Dorsolateral prefrontal cortex (tissue), 120 donors: ENCODE measurements at regions of chr9 and their contacts with region 1.

Region 1: GRCh38 chr9:125261501-125262293 is at the start of gene GAPVD1:
- DNase-seq: peak; percentile 64 to 94 (median 81)
- H3K4me3 ChIP-seq: peak within 1 kb of the TSS; percentile 63 to 100 (median 96)
- H3K27ac ChIP-seq: peak within 1 kb of the TSS; percentile 13 to 94 (median 85)
- H3K27me3 ChIP-seq: no peaks in the 10 kb centered on the region
- CTCF ChIP-seq: peak; percentile 10 to 77 (median 56)
- total RNA-seq, gene GAPVD1: 52.7 to 86.4 (median 69.3) TPM

Region 2: DNA sequence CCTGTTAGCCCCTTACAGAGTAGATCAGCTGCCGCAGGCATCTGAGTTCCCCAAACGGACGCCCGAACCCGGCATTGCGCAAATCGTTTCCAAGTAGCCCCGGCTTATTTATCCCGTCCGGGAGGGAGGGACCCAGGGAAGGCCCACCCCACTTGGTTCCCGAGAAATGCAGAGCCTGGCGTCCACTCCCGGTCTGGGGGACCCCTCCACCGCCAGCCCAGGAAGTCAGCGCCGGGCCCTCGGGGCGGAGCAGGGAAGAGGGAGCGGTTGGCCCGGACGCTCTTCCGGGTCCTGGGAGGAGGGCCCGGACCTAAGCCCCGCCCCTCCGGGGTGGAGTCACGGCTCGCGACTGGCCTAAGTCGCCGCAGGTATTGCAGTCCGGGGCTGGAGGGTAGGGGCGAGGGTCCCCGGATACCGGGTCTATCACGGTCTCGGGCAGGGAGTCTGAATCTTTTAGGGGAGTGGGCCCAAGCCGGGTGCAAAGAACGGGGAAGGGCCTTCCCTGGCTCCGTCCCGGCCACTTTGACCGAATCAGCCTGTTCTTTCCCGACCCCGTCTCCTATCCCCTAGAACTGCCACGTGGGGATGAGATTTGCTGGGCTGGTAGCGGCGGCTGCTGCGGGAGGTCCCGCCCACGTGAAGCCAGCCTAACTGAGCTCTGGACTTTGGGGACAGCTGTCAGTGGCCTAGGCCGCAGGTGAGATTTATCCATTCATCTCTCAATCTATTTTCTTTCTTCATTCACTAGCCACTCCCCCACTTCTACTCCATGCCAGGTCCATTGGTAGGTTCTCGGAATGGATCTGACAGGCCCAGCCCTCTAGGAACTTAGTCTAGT is 61.3 kb before region 1 on chr9 and contains the start of gene RABEPK:
- intact Hi-C with region 1: loop called in 1 of 2 experiments (anchors 5 kb)
- DNase-seq: peak; percentile 82 to 95 (median 90)
- H3K4me3 ChIP-seq: peak within 1 kb of the TSS; percentile 67 to 100 (median 88)
- H3K27ac ChIP-seq: peak within 1 kb of the TSS in 57 of 59 donors; percentile 36 to 96 (median 89)
- H3K27me3 ChIP-seq: no peaks in the 10 kb centered on the region
- CTCF ChIP-seq: peak in 10 of 56 donors; percentile 4 to 48 (median 16)
- total RNA-seq, gene RABEPK: 15.3 to 31.2 (median 21.3) TPM

Region 3: GRCh38 chr9:125296833-125297372 is 35.2 kb after region 1 on chr9:
- intact Hi-C with region 1: no loop called
- DNase-seq: no peak
- H3K4me3 ChIP-seq: no peak overlapping the region
- H3K27ac ChIP-seq: no peak overlapping the region
- H3K27me3 ChIP-seq: no peaks in the 10 kb centered on the region
- CTCF ChIP-seq: no peak